ENCODE measurements at regions of chr17 and their contacts with region 1.

Region 1: DNA sequence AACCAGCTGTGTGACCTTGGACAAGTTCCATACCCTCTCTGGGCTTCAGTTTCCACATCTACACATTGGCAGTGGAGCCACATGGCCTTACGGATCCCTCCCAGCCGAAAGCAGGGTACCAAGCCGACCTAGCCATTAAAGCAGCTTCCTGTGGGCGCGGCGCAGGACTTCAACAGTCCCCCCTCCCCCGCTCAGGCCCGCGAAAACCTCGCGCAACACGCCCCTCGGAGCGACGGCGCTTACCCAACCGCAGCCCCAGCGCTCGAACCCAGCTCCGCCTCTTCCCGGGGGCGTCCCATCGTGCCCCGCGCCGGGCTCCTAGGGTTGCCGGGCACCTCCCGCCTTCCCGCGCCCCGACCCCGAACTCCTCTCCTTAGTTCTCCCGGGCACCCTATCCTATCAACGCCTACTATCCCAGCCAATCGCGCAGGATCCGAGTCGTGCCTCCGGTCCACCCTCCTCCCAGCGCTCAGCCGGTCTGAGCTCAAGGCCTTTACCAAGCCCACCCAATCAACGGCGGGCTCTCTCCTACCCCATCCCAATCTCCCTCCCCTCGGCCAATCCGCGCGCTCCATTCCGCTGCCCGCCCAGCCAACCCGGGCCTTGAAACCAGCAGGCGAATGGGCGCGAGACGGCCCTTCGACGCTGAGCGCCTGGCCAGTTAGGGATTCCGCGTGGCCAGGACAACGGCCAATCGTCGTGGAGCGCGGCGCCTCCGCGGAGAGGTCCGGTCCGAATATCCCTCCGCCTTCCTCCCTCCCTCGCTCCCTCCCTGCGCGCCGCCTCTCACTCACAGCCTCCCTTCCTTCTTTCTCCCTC is at the start of gene KPNB1:
- DNase-seq: peak; percentile 99
- ATAC-seq: peak; percentile 86
- H3K4me3 Mint-ChIP-seq: peak within 1 kb of the TSS; percentile 98
- H3K27ac Mint-ChIP-seq: peak within 1 kb of the TSS; percentile 96
- H3K4me1 Mint-ChIP-seq: peaks cover 52% of the 10 kb centered on the region
- H3K27me3 Mint-ChIP-seq: no peaks in the 10 kb centered on the region
- total RNA-seq, gene KPNB1: 640 to 656 TPM

Region 2: DNA sequence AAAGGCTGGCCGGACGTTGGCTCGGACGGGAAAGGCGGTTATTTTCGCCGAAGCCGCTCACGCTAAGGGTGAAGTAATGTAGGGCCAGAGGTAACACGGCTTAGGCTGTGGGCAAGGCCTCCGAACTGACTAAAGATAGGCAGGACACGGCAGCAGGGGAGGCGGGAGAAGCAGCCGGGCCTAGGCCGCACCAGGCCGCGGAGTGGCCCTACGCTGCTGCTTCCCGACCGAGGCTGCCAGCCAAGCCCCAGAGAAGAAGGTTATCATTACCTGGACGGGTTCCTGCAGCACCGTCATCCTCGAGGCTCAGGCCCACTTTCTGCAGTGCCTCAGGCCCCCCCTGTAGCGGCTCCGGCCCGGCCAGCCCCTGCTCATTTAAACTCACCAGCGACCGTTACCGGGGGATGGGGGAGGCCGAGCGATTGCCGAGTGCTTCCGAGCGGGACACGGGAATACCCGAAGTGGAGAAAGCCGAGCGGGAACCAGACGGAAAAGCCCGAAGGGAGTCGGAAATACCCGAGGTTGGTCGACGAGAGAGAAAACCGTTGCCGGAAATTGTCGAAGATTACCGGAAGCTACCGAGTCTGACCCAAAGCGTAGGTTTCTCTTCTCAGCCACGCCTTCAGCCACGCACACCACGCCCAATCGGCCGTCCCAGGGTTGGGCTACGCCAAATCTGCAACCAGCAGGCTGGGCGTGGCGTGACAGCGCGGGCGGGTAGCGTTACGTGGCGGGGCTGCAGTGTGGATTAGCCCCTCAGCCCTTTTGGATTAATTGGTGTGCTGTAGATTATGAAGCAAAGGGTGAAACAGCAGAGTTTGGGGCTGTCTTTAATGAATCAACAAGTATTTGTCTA is 460.3 kb before region 1 on chr17 and contains the start of gene CDC27:
- CTCF ChIA-PET with region 1: no interaction called
- POLR2A ChIA-PET with region 1: no interaction called
- intact Hi-C with region 1: loop called (anchors 1 kb)
- DNase-seq: peak; percentile 100
- ATAC-seq: peak; percentile 97
- H3K4me3 Mint-ChIP-seq: peak within 1 kb of the TSS; percentile 95
- H3K27ac Mint-ChIP-seq: peak within 1 kb of the TSS; percentile 95
- H3K4me1 Mint-ChIP-seq: peaks cover 37% of the 10 kb centered on the region
- H3K27me3 Mint-ChIP-seq: no peaks in the 10 kb centered on the region
- total RNA-seq, gene CDC27: 123 to 166 TPM

Region 3: GRCh38 chr17:47663912-47664625 is 14.7 kb after region 1 on chr17:
- CTCF ChIA-PET with region 1: interaction called, 71 read pairs
- POLR2A ChIA-PET with region 1: interaction called, 21 read pairs
- intact Hi-C with region 1: loop called (anchors 1 kb)
- DNase-seq: peak; percentile 73
- ATAC-seq: peak; percentile 65
- H3K4me3 Mint-ChIP-seq: no peak overlapping the region
- H3K27ac Mint-ChIP-seq: peak overlapping the region; percentile 83
- H3K4me1 Mint-ChIP-seq: peaks cover 28% of the 10 kb centered on the region
- H3K27me3 Mint-ChIP-seq: no peaks in the 10 kb centered on the region

Region 4: GRCh38 chr17:47720754-47721533 is 71.6 kb after region 1 on chr17:
- CTCF ChIA-PET with region 1: interaction called, 6 read pairs
- POLR2A ChIA-PET with region 1: interaction called, 6 read pairs
- intact Hi-C with region 1: loop called in 1 of 2 experiments (anchors 1 kb)
- DNase-seq: peak; percentile 99
- ATAC-seq: peak; percentile 71
- H3K4me3 Mint-ChIP-seq: peak overlapping the region; percentile 69
- H3K27ac Mint-ChIP-seq: peak overlapping the region; percentile 98
- H3K4me1 Mint-ChIP-seq: peaks cover 97% of the 10 kb centered on the region
- H3K27me3 Mint-ChIP-seq: no peaks in the 10 kb centered on the region

Region 5: GRCh38 chr17:47895856-47896671 is 246.7 kb after region 1 on chr17 and contains the start of gene SP2:
- CTCF ChIA-PET with region 1: no interaction called
- POLR2A ChIA-PET with region 1: interaction called, 4 read pairs
- intact Hi-C with region 1: loop called in 1 of 2 experiments (anchors 1 kb)
- DNase-seq: peak; percentile 99
- ATAC-seq: peak; percentile 94
- H3K4me3 Mint-ChIP-seq: peak within 1 kb of the TSS; percentile 96
- H3K27ac Mint-ChIP-seq: peak within 1 kb of the TSS; percentile 96
- H3K4me1 Mint-ChIP-seq: peaks cover 46% of the 10 kb centered on the region
- H3K27me3 Mint-ChIP-seq: no peaks in the 10 kb centered on the region
- total RNA-seq, gene SP2: 15.7 to 19.8 TPM

Region 6: GRCh38 chr17:48047741-48048383 is 398.5 kb after region 1 on chr17 and contains the start of gene NFE2L1:
- CTCF ChIA-PET with region 1: no interaction called
- POLR2A ChIA-PET with region 1: no interaction called
- intact Hi-C with region 1: loop called in 1 of 2 experiments (anchors 1 kb)
- DNase-seq: peak; percentile 99
- ATAC-seq: peak; percentile 97
- H3K4me3 Mint-ChIP-seq: peak within 1 kb of the TSS; percentile 88
- H3K27ac Mint-ChIP-seq: peak within 1 kb of the TSS; percentile 96
- H3K4me1 Mint-ChIP-seq: peaks cover 45% of the 10 kb centered on the region
- H3K27me3 Mint-ChIP-seq: no peaks in the 10 kb centered on the region
- total RNA-seq, gene NFE2L1: 100 to 127 TPM